CD8-positive, alpha-beta T cell (primary cell): ENCODE measurements at regions of chr11 and their contacts with region 1.

Region 1: GRCh38 chr11:128695539-128696221 is 1.8 kb downstream of the FLI1 start:
- DNase-seq: peak in 6 of 9 experiments; percentile 29 to 78 (median 54)
- ATAC-seq: peak; percentile 47
- H3K4me3 ChIP-seq: peak overlapping the region; percentile 93 to 95
- H3K4me3 Mint-ChIP-seq: peak overlapping the region; percentile 98
- H3K27ac ChIP-seq: peak overlapping the region; percentile 80 to 89
- H3K27ac Mint-ChIP-seq: peak overlapping the region; percentile 98
- H3K4me1 ChIP-seq: peaks cover 54% of the 10 kb centered on the region
- H3K4me1 Mint-ChIP-seq: peaks cover 58% of the 10 kb centered on the region
- H3K27me3 ChIP-seq: no peaks in the 10 kb centered on the region
- H3K27me3 Mint-ChIP-seq: no peaks in the 10 kb centered on the region
- CTCF ChIP-seq: no peak

Region 2: DNA sequence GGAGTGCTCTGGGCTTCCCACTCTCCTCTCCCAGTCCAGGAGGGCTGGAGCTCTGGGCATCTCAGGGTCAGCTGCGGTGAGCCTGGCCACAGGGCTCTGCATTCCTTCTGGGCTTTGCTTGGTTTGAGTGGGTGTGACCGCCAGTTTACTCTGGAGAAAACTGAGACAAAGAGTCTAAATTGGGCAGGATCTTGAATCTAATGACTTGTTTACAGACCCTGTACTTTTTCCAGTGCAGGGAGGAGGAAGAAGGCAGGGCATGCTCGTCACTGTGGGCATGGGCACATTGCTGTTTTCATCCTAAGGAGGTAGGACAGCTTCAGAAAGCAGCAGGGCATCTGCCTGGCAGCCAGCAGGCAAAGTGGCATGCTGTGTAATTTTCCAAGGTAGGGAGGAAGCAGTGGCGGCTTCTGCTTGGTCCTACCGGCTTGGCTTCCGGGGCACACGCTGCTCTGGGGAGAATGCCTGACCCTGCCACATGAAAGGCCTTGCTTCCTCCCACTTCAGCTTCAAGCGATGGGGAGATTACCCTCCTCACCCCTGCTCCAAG is 21.1 kb after region 1 on chr11:
- CTCF ChIA-PET with region 1: interaction called, 5 read pairs
- POLR2A ChIA-PET with region 1: interaction called, 16 read pairs
- intact Hi-C with region 1: loop called (anchors 1 kb)
- DNase-seq: peak in 6 of 9 experiments; percentile 55 to 85 (median 70)
- ATAC-seq: peak; percentile 64
- H3K4me3 ChIP-seq: peak overlapping the region; percentile 9 to 14
- H3K4me3 Mint-ChIP-seq: peak overlapping the region; percentile 80
- H3K27ac ChIP-seq: peak overlapping the region; percentile 50 to 81
- H3K27ac Mint-ChIP-seq: peak overlapping the region; percentile 99
- H3K4me1 ChIP-seq: peaks cover 97% of the 10 kb centered on the region
- H3K4me1 Mint-ChIP-seq: peaks cover 99% of the 10 kb centered on the region
- H3K27me3 ChIP-seq: no peaks in the 10 kb centered on the region
- H3K27me3 Mint-ChIP-seq: no peaks in the 10 kb centered on the region
- CTCF ChIP-seq: no peak

Region 3: GRCh38 chr11:128725630-128726319 is 30.1 kb after region 1 on chr11:
- CTCF ChIA-PET with region 1: interaction called, 3 read pairs
- POLR2A ChIA-PET with region 1: interaction called, 28 read pairs
- intact Hi-C with region 1: loop called (anchors 1 to 2 kb)
- DNase-seq: peak; percentile 19 to 95 (median 67)
- ATAC-seq: peak; percentile 56
- H3K4me3 ChIP-seq: peak overlapping the region; percentile 16 to 25
- H3K4me3 Mint-ChIP-seq: peak overlapping the region; percentile 87
- H3K27ac ChIP-seq: peak overlapping the region; percentile 6 to 69
- H3K27ac Mint-ChIP-seq: peak overlapping the region; percentile 89
- H3K4me1 ChIP-seq: peaks cover 99% of the 10 kb centered on the region
- H3K4me1 Mint-ChIP-seq: peaks cover 98% of the 10 kb centered on the region
- H3K27me3 ChIP-seq: no peaks in the 10 kb centered on the region
- H3K27me3 Mint-ChIP-seq: no peaks in the 10 kb centered on the region
- CTCF ChIP-seq: no peak

Region 4: DNA sequence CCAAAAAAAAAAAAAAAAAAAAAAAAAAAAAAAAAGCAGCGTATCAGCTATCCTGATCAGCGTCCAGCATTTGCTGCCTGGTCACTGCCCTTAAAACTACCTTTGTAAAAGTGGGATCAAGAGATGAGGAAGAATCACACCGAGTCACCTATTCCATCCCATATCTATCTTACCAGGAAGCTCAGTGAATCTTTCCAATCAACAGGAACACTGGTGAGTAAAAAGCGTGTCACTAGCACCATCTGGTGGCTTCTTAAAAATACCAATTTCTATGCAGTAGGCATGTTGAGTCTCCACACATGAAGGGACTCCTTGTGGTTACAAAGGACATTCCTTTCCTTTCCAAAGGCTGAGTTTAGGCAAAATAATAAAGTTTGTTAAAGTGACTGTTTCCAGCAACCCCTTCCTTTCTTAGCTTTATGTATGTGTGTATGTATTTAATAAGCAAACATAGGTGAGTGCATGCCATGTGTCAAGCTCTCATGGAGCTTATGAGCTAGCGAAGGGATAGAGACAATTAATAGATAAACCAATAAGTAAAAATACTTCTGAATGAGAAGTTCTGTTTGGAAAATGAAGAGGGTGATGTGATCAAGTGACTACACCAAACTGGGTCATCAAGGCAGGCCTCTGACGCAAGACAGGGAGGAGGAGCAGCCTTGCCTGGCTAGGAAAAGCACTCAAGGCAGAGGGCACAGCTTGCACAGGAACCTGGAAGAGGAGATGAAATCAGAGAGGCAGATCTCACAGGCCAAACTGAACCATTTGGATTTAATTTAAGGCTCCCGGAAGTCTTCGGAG is 260.9 kb after region 1 on chr11:
- CTCF ChIA-PET with region 1: no interaction called
- POLR2A ChIA-PET with region 1: no interaction called
- intact Hi-C with region 1: no loop called
- DNase-seq: peak in 3 of 9 experiments; percentile 12 to 66 (median 59)
- ATAC-seq: no peak
- H3K4me3 ChIP-seq: no peak overlapping the region
- H3K4me3 Mint-ChIP-seq: no peak overlapping the region
- H3K27ac ChIP-seq: no peak overlapping the region
- H3K27ac Mint-ChIP-seq: no peak overlapping the region
- H3K4me1 ChIP-seq: no peaks in the 10 kb centered on the region
- H3K4me1 Mint-ChIP-seq: peaks cover 2% of the 10 kb centered on the region
- H3K27me3 ChIP-seq: no peaks in the 10 kb centered on the region
- H3K27me3 Mint-ChIP-seq: peaks cover 8% of the 10 kb centered on the region
- CTCF ChIP-seq: peak; percentile 70